ENCODE measurements at regions of chr6 and their contacts with region 1.

Region 1: GRCh38 chr6:46263707-46264086 is 92.9 kb upstream of the ENPP5 start:
- DNase-seq: peak; percentile 40 to 74 (median 65)
- H3K4me3 ChIP-seq: no peak overlapping the region
- H3K27ac ChIP-seq: no peak overlapping the region
- H3K4me1 ChIP-seq: peaks cover 0 to 5% (median 0%) of the 10 kb centered on the region in 4 experiments
- H3K27me3 ChIP-seq: no peaks in the 10 kb centered on the region

Region 2: GRCh38 chr6:46191961-46192360 is 71.7 kb before region 1 on chr6:
- CTCF ChIA-PET with region 1: no interaction called
- POLR2A ChIA-PET with region 1: no interaction called
- DNase-seq: no peak
- H3K4me3 ChIP-seq: no peak overlapping the region
- H3K27ac ChIP-seq: no peak overlapping the region
- H3K4me1 ChIP-seq: no peaks in the 10 kb centered on the region
- H3K27me3 ChIP-seq: no peaks in the 10 kb centered on the region

Region 3: GRCh38 chr6:46273911-46274310 is 10.2 kb after region 1 on chr6:
- CTCF ChIA-PET with region 1: interaction called, 10 read pairs
- POLR2A ChIA-PET with region 1: no interaction called
- DNase-seq: peak; percentile 83 to 96 (median 90)
- H3K4me3 ChIP-seq: no peak overlapping the region
- H3K27ac ChIP-seq: no peak overlapping the region
- H3K4me1 ChIP-seq: peaks cover 7 to 24% (median 10%) of the 10 kb centered on the region in 4 experiments
- H3K27me3 ChIP-seq: no peaks in the 10 kb centered on the region

Region 4: GRCh38 chr6:46293641-46294316 is 30.1 kb after region 1 on chr6:
- CTCF ChIA-PET with region 1: no interaction called
- POLR2A ChIA-PET with region 1: no interaction called
- DNase-seq: no peak
- H3K4me3 ChIP-seq: no peak overlapping the region
- H3K27ac ChIP-seq: no peak overlapping the region
- H3K4me1 ChIP-seq: peaks cover 4 to 20% (median 12%) of the 10 kb centered on the region in 4 experiments
- H3K27me3 ChIP-seq: no peaks in the 10 kb centered on the region

Measured in common myeloid progenitor, CD34-positive (primary cell).